Psoas muscle (tissue), 8 donors: ENCODE measurements at regions of chr9 and their contacts with region 1.

Region 1: GRCh38 chr9:4769321-4770080 is 23.2 kb upstream of the RCL1 start:
- DNase-seq: no peak
- ATAC-seq: no peak
- H3K4me3 ChIP-seq: no peak overlapping the region
- H3K27ac ChIP-seq: no peak overlapping the region
- H3K4me1 ChIP-seq: no peaks in the 10 kb centered on the region
- H3K27me3 ChIP-seq: no peaks in the 10 kb centered on the region
- CTCF ChIP-seq: no peak

Region 2: GRCh38 chr9:4904322-4905134 is 135.0 kb after region 1 on chr9:
- intact Hi-C with region 1: loop called in 1 of 2 experiments (anchors 5 kb)
- DNase-seq: no peak
- ATAC-seq: peak in 3 of 4 donors; percentile 7 to 37 (median 29)
- H3K4me3 ChIP-seq: no peak overlapping the region
- H3K27ac ChIP-seq: no peak overlapping the region
- H3K4me1 ChIP-seq: peaks cover 8% of the 10 kb centered on the region
- H3K27me3 ChIP-seq: no peaks in the 10 kb centered on the region
- CTCF ChIP-seq: no peak

Region 3: GRCh38 chr9:5450359-5451091 is 681.0 kb after region 1 on chr9 and contains the start of gene CD274:
- intact Hi-C with region 1: no loop called
- DNase-seq: peak; percentile 89 to 94
- ATAC-seq: peak; percentile 98 to 99 (median 99)
- H3K4me3 ChIP-seq: peak within 1 kb of the TSS; percentile 70
- H3K27ac ChIP-seq: peak within 1 kb of the TSS; percentile 73
- H3K4me1 ChIP-seq: peaks cover 3% of the 10 kb centered on the region
- H3K27me3 ChIP-seq: no peaks in the 10 kb centered on the region
- CTCF ChIP-seq: peak; percentile 71
- total RNA-seq, gene CD274: 0.93 to 4.6 (median 2.1) TPM